ENCODE measurements at regions of chr2 and their contacts with region 1.

Region 1: DNA sequence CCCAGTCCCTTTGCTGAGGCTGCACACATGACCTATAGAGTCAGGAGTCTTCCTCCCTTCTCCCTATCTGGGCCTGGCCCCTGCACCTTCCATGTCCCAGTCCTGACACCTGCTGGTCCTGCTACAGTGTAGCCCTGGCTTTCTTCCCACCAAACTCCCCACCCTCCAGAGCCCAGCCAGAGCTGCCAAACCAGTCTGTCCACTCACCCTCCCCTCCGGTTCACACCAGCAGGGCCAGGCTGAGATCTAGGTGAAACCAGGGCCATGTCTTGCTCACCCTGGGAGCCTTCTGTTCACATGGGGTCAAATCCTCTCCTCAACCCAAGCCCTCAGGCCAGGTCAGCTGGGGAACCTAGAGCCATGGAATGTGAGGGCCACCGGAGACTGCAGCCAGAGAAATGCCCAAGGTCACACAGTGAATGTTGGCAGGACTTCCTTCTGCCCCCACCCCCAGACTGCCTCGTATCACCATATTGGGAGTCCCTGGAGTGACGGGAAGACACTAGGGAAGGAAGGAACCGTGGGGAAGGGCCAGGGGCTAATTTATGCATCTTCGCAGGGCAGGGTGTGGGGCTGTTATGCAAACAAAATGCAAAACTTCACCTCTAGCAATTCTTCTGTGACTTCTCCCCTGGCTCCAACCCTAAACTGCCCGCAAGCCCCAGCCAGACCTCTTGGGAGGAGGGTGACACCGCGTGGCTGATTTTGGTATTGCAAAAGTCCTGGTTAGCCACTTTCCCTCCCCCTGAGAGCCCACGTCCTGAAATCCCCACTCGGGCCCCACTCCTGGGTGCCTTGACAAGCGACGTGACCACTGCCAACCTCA is 14.6 kb downstream of the TNS1 start:
- DNase-seq: no peak
- ATAC-seq: peak; percentile 90
- H3K4me3 ChIP-seq: no peak overlapping the region
- H3K27ac ChIP-seq: no peak overlapping the region
- H3K4me1 ChIP-seq: no peaks in the 10 kb centered on the region
- H3K27me3 ChIP-seq: peaks cover 4% of the 10 kb centered on the region; the same call in 1 of the 2 replicates
- CTCF ChIP-seq: peak; percentile 92

Region 2: GRCh38 chr2:217899231-217900009 is 88.8 kb before region 1 on chr2:
- CTCF ChIA-PET with region 1: no interaction called
- POLR2A ChIA-PET with region 1: no interaction called
- in situ Hi-C with region 1: no loop called
- intact Hi-C with region 1: loop called (anchors 5 kb)
- DNase-seq: no peak
- ATAC-seq: peak; percentile 79
- H3K4me3 ChIP-seq: no peak overlapping the region
- H3K27ac ChIP-seq: no peak overlapping the region
- H3K4me1 ChIP-seq: no peaks in the 10 kb centered on the region
- H3K27me3 ChIP-seq: peaks cover 2% of the 10 kb centered on the region; the same call in 1 of the 2 replicates
- CTCF ChIP-seq: peak; percentile 79